Activated T-helper 1 cell treated with anti-CD3 and anti-CD28 coated beads, Interleukin-12 subunit alpha, Interleukin-12 subunit beta, Interleukin-2, Interleukin-4 antibody, amounts not matched to agents 30 ng/mL and 10 ng/mL and 1 ng/mL, durations not matched to agents 14 hours and 24 hours and 36 hours (primary cell): ENCODE measurements at regions of chr1 and their contacts with region 1.

Region 1: GRCh38 chr1:109532365-109533136 is 7.1 kb upstream of the GPR61 start:
- DNase-seq: peak; percentile 85
- H3K4me3 Mint-ChIP-seq: peak overlapping the region; percentile 53
- H3K27ac Mint-ChIP-seq: peak overlapping the region; percentile 86
- H3K4me1 Mint-ChIP-seq: peaks cover 24% of the 10 kb centered on the region
- H3K27me3 Mint-ChIP-seq: no peaks in the 10 kb centered on the region

Region 2: GRCh38 chr1:109201123-109201703 is 331.3 kb before region 1 on chr1:
- intact Hi-C with region 1: loop called (anchors 1 kb)
- DNase-seq: no peak
- H3K4me3 Mint-ChIP-seq: no peak overlapping the region
- H3K27ac Mint-ChIP-seq: peak overlapping the region; percentile 26
- H3K4me1 Mint-ChIP-seq: peaks cover 38% of the 10 kb centered on the region
- H3K27me3 Mint-ChIP-seq: peaks cover 2% of the 10 kb centered on the region

Region 3: DNA sequence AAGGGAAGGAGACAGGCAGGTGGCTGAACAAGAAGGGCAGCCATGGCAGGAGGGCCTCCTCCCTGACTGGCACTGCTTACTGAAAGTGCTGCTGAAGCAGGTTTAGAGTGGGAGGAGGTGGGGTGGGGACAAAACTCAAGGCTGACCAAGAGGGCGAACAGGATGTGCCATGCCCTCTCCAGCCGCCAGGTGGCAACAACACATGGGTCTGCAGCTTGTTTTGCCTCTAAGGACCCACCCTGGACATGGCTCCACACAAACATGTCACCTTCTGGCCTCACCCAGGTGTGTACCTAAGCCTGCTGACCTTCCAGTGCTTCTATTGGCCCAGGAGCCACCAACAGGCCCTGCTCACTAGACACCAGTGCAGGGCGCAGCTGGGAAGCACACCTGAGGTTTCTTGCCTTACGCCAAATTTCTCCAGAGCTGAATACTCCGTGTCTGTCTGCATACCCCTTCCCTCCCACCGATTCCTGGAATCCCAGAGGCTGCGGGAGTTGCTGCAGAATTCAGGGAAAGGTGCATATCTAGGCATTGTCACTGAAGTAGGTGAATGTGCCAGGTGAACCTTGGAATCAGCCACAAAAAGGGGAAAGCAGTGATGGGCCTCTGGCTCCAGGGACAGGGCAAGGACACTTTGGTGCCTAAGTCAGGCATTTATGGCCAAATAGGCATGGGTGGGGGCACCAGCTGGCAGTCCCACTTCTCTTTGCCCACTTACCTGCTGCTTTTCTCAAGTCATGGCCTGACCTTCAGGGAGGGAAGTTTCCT is 254.9 kb before region 1 on chr1:
- intact Hi-C with region 1: loop called (anchors 1 kb)
- DNase-seq: peak; percentile 58
- H3K4me3 Mint-ChIP-seq: no peak overlapping the region
- H3K27ac Mint-ChIP-seq: no peak overlapping the region
- H3K4me1 Mint-ChIP-seq: peaks cover 16% of the 10 kb centered on the region
- H3K27me3 Mint-ChIP-seq: no peaks in the 10 kb centered on the region

Region 4: GRCh38 chr1:109412551-109412950 is 120.0 kb before region 1 on chr1:
- intact Hi-C with region 1: no loop called
- DNase-seq: no peak
- H3K4me3 Mint-ChIP-seq: no peak overlapping the region
- H3K27ac Mint-ChIP-seq: no peak overlapping the region
- H3K4me1 Mint-ChIP-seq: peaks cover 29% of the 10 kb centered on the region
- H3K27me3 Mint-ChIP-seq: no peaks in the 10 kb centered on the region

Region 5: DNA sequence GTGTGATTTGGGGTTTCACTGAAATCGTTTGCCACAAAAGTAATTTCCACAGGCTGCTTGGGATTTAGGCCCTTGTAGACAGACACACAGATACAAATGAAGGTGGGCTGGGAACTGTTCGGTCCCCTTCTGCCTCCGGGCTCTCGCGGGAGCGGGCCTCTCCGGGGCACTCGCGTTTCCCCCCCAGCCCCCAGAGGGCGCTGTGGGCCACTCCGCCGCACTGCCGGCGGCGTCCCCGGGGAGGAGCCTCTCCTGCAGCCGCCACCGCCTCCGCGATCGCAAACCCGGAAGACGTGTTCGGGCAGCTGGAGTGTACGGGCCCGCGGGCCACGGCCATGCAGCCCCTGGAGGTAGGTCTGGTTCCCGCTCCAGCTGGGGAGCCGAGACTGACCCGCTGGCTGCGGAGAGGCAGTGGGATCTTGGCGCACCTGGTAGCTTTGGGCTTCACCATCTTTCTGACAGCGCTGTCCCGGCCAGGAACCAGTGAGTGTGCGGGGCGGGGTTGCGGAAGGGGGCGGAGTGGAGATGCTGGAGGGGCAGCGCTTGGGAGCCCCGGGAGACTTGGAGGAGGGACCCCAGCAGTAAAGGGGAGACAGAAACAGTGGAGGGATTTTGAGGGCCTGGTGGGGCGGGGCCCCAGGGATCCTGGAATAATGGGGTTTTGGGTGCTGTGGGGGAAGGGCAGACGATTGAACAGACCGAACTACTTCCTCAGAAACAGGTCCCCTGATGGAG is 38.6 kb before region 1 on chr1 and contains the start of gene CYB561D1:
- intact Hi-C with region 1: loop called (anchors 1 kb)
- DNase-seq: peak; percentile 87
- H3K4me3 Mint-ChIP-seq: peak within 1 kb of the TSS; percentile 96
- H3K27ac Mint-ChIP-seq: peak within 1 kb of the TSS; percentile 71
- H3K4me1 Mint-ChIP-seq: peaks cover 34% of the 10 kb centered on the region
- H3K27me3 Mint-ChIP-seq: no peaks in the 10 kb centered on the region
- total RNA-seq, gene CYB561D1: 12.6 and 13.4 TPM in 2 replicates

Region 6: GRCh38 chr1:109509176-109510134 is 23.1 kb before region 1 on chr1 and contains the start of gene AMIGO1:
- intact Hi-C with region 1: loop called (anchors 1 kb)
- DNase-seq: peak; percentile 25
- H3K4me3 Mint-ChIP-seq: peak within 1 kb of the TSS; percentile 87
- H3K27ac Mint-ChIP-seq: peak within 1 kb of the TSS; percentile 49
- H3K4me1 Mint-ChIP-seq: peaks cover 23% of the 10 kb centered on the region
- H3K27me3 Mint-ChIP-seq: peaks cover 51% of the 10 kb centered on the region
- total RNA-seq, gene AMIGO1: 1.2 TPM in 2 replicates